HEK293 (cell line): ENCODE measurements at regions of chr7 and their contacts with region 1.

Region 1: GRCh38 chr7:74206589-74207120 is 3.2 kb upstream of the LAT2 start:
- H3K4me3 ChIP-seq: no peak overlapping the region
- H3K27ac ChIP-seq: no peak overlapping the region
- H3K4me1 ChIP-seq: no peaks in the 10 kb centered on the region
- CTCF ChIP-seq: peak; percentile 81

Region 2: GRCh38 chr7:74126220-74126880 is 80.3 kb before region 1 on chr7:
- CTCF ChIA-PET with region 1: no interaction called
- POLR2A ChIA-PET with region 1: no interaction called
- H3K4me3 ChIP-seq: no peak overlapping the region
- H3K27ac ChIP-seq: no peak overlapping the region
- H3K4me1 ChIP-seq: no peaks in the 10 kb centered on the region
- CTCF ChIP-seq: no peak

Region 3: DNA sequence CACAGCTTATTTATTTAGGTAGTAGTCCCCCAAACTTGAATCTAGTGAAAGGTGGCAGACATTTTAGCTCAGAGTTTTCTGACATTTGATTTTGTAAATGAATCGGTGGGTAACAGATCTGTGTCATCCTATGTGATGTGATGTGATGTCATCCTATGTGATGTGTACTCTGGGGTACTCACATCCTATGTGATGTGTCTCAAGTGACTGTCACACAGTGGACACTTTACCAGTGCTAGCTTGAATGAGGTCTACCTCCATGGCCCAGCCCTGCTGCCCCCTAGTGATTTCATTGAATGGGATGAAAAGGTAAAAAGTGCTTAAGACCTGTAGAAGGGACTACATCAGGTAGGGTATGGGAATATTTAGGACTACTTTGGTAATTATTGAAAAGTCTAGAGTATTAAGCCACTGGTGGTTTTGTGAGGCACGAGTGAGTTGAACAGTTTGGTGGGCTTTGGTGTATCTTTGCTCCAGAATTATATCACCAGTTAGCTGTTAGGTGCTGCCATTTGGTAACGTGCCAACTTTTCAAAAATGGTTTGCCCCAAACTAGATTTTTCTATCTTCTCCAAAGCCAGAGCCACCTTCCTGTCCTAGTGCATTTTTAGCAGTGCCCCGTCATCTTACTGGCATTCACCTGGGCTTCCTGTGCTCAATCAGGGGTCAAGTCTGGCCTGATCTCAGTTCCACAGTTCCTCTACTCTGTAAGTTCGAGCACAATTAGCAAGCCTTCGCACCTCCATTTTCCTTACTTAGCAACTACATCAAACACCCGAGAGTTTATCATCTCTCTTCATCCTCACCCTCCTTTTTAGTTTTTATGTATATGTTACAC is 22.8 kb before region 1 on chr7:
- CTCF ChIA-PET with region 1: interaction called, 13 read pairs
- POLR2A ChIA-PET with region 1: no interaction called
- H3K4me3 ChIP-seq: no peak overlapping the region
- H3K27ac ChIP-seq: no peak overlapping the region
- H3K4me1 ChIP-seq: peaks cover 10% of the 10 kb centered on the region; the same call in 1 of the 2 replicates
- CTCF ChIP-seq: no peak

Region 4: GRCh38 chr7:74193054-74193453 is 13.6 kb before region 1 on chr7:
- CTCF ChIA-PET with region 1: interaction called, 33 read pairs
- POLR2A ChIA-PET with region 1: no interaction called
- H3K4me3 ChIP-seq: no peak overlapping the region
- H3K27ac ChIP-seq: no peak overlapping the region
- H3K4me1 ChIP-seq: no peaks in the 10 kb centered on the region
- CTCF ChIP-seq: no peak

Region 5: GRCh38 chr7:74302745-74303221 is 96.1 kb after region 1 on chr7:
- CTCF ChIA-PET with region 1: no interaction called
- POLR2A ChIA-PET with region 1: no interaction called
- H3K4me3 ChIP-seq: no peak overlapping the region
- H3K27ac ChIP-seq: no peak overlapping the region
- H3K4me1 ChIP-seq: no peaks in the 10 kb centered on the region
- CTCF ChIP-seq: no peak

Region 6: DNA sequence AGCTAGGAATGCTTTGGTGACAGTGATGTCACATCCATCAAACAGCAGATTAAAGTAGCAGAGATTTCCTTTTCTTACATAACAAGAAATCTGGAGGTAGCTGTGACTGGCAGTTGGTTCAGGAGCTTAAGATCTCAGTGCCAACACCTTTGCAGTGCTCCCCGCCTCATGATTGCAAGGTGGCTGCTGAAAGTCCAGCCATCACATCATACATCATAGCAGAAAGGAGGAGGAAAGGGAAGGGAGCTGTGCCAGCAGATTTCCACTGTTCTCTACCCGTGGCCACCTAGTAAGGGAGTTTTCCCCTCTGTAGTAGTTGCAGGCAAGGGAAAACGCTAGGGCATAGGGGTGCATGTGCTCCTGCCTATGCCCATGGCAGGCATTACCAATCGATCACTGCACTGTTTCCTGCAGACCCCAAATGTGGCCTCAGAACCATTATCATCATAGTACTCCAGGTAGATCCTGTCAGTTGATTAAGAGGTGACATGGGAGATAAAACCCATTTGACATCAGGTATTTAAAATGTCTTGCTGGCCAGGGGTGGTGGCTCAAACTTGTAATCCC is 189.2 kb after region 1 on chr7:
- CTCF ChIA-PET with region 1: interaction called, 126 read pairs
- POLR2A ChIA-PET with region 1: no interaction called
- H3K4me3 ChIP-seq: no peak overlapping the region
- H3K27ac ChIP-seq: no peak overlapping the region
- H3K4me1 ChIP-seq: no peaks in the 10 kb centered on the region
- CTCF ChIP-seq: no peak

Region 7: DNA sequence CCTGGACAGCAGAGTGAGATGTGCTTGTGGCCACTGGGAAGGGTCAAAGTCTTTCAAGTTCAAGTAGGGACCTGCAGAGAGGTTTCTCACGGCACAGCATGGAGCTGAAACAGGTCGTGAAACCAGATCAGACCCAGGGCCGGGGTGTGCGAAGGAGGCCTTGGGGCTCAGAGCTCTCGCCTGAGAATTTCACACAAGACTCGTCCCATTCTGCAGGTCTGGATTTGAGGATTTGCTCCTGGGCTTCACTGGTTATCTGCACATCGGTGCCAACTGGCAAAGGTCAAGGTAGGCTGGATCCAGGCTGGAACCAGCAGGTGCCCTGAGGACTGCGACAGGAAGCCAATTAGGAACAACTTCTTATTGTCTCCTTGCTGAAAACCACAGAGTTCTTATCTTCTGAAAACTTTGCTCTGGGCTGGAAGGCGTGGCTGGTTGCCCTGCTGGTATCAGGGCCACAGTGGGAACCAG is 426.8 kb after region 1 on chr7:
- CTCF ChIA-PET with region 1: no interaction called
- POLR2A ChIA-PET with region 1: no interaction called
- H3K4me3 ChIP-seq: no peak overlapping the region
- H3K27ac ChIP-seq: no peak overlapping the region
- H3K4me1 ChIP-seq: peaks cover 3% of the 10 kb centered on the region
- CTCF ChIP-seq: no peak